ENCODE measurements at regions of chr14 and their contacts with region 1.

Region 1: GRCh38 chr14:50532502-50533240 is at the start of gene MAP4K5:
- DNase-seq: peak; percentile 93
- H3K4me3 ChIP-seq: peak within 1 kb of the TSS; percentile 96
- H3K27ac ChIP-seq: peak within 1 kb of the TSS; percentile 98
- H3K4me1 ChIP-seq: peaks cover 8% of the 10 kb centered on the region
- H3K27me3 ChIP-seq: no peaks in the 10 kb centered on the region
- CTCF ChIP-seq: peak; percentile 82 to 92 (median 91)
- POLR2A ChIP-seq: no peak
- total RNA-seq, gene MAP4K5: 60.4 to 67.0 TPM

Region 2: GRCh38 chr14:50311975-50312733 is 220.5 kb before region 1 on chr14 and contains the starts of genes DMAC2L and L2HGDH:
- intact Hi-C with region 1: loop called (anchors 10 kb)
- DNase-seq: peak; percentile 95
- H3K4me3 ChIP-seq: peak within 1 kb of the TSS; percentile 75 to 85
- H3K27ac ChIP-seq: peak within 1 kb of the TSS; percentile 94
- H3K4me1 ChIP-seq: peaks cover 7% of the 10 kb centered on the region
- H3K27me3 ChIP-seq: no peaks in the 10 kb centered on the region
- CTCF ChIP-seq: no peak
- POLR2A ChIP-seq: peak; percentile 2
- total RNA-seq, gene DMAC2L: 30.0 to 33.5 TPM
- total RNA-seq, gene L2HGDH: 7.9 to 8.9 TPM

Region 3: DNA sequence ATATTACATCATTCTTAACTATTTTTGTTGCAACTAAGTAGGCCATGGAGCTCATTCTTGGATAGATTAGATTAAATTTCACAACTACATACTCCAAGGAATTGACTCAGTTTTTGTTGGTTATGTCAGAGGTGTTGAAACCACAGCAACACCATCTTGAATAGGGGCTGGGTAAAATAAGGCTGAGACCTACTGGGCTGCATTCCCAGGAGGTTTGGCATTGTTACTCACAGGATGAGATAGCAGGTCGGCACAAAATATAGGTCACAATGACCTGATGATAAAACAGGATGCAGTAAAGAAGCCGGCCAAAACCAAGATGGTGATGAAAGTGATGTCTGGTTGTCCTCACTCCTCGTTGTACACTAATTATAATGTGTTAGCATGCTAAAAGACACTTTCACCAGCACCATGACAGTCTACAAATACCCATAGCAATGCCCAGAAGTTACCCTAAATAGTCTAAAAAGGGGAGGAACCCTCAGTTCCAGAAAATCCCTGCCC is 199.6 kb before region 1 on chr14:
- intact Hi-C with region 1: no loop called
- DNase-seq: no peak
- H3K4me3 ChIP-seq: no peak overlapping the region
- H3K27ac ChIP-seq: no peak overlapping the region
- H3K4me1 ChIP-seq: peaks cover 16% of the 10 kb centered on the region
- H3K27me3 ChIP-seq: no peaks in the 10 kb centered on the region
- CTCF ChIP-seq: no peak
- POLR2A ChIP-seq: no peak

Measured in testis (tissue), 5 donors.